ENCODE measurements at regions of chr1 and their contacts with region 1.

Region 1: DNA sequence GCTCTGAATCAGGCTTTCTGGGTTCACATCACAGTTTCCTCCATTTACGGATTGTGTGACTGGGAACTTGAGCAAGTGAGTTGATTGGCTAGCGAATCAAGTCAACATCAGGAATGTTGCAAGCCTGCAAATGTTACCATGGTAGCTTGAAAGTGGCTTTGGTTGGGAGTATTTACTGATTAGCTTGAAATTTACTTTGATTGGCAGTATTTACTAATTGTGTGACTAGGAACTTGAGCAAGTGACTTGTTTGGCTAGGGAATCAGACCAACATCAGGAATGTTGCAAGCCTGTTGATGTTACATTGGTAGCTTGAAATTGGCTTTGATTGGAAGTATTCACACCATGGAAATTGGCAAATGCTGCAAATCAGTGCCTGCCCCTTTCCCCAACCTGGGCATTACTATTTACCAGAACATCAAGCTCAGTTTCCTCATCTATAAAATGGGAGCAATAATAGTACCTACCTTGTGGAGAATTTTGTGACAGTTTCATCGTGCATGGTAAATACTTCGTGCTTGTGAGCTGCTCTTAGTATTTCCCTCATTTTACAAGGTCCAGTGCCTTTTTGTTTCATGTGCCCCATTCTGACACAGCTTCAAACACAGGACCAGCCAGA is 23.1 kb upstream of the B3GALNT2 start:
- DNase-seq: no peak
- H3K4me3 ChIP-seq: no peak overlapping the region
- H3K27ac ChIP-seq: no peak overlapping the region
- H3K27me3 ChIP-seq: no peaks in the 10 kb centered on the region
- CTCF ChIP-seq: no peak

Region 2: DNA sequence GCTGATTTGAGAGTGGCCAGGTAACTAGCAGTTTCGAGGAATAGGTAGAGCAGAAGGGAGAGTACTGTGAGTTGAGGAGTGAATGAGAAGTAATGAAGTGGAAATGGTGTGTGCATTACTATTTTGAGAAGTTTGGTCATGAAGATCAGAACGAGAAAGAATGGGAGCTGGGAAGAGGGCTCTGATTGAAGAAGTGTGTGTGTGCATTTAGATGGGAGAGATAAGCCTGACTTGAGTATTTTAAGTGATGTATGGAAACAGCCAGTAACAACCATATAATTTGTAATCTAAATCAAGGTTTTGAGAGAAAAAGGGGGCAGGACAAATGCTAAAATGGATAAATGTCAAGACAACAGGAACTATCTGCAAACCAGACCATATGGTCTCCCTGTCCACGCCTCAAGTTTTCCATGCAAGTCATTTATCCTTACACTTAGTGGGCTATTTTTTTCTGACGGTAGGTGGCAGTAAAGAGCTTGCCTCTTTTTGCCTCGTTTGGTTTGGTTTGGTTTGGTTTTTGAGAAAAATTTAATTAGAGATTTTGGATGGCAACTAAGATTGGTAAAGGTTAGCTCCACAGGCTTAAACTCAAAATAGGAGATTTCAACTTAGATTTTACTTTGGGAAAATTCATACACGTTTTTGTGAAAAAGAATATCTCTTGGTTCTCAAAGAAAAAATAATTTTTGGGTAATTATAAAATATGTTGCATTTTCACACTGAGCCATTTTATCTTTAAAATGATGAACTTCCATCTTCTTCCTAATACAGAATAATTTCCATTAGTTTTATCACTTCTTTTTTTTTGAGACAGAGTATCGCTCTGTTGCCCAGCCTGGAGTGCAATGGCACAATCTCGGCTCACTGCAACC is 13.6 kb before region 1 on chr1:
- CTCF ChIA-PET with region 1: interaction called, 11 read pairs
- POLR2A ChIA-PET with region 1: no interaction called
- DNase-seq: peak; percentile 49
- H3K4me3 ChIP-seq: no peak overlapping the region
- H3K27ac ChIP-seq: no peak overlapping the region
- H3K27me3 ChIP-seq: no peaks in the 10 kb centered on the region
- CTCF ChIP-seq: peak; percentile 93

Measured in AG04450 (cell line).